Panc1 (cell line): ENCODE measurements at regions of chr15 and their contacts with region 1.

Region 1: GRCh38 chr15:41072013-41072412 is 44.1 kb downstream of the INO80 start:
- DNase-seq: no peak
- ATAC-seq: no peak
- H3K4me3 ChIP-seq: no peak overlapping the region
- H3K27ac ChIP-seq: no peak overlapping the region
- H3K4me1 ChIP-seq: no peaks in the 10 kb centered on the region
- H3K27me3 ChIP-seq: no peaks in the 10 kb centered on the region
- CTCF ChIP-seq: no peak

Region 2: GRCh38 chr15:40873625-40874561 is 198.1 kb before region 1 on chr15 and contains the start of gene RHOV:
- CTCF ChIA-PET with region 1: no interaction called
- POLR2A ChIA-PET with region 1: interaction called, 10 read pairs
- in situ Hi-C with region 1: no loop called
- intact Hi-C with region 1: no loop called
- DNase-seq: no peak
- ATAC-seq: peak; percentile 94
- H3K4me3 ChIP-seq: peak within 1 kb of the TSS; percentile 51 to 59
- H3K27ac ChIP-seq: no peak within 1 kb of the TSS
- H3K4me1 ChIP-seq: peaks cover 4% of the 10 kb centered on the region; the same call in 1 of the 2 replicates
- H3K27me3 ChIP-seq: no peaks in the 10 kb centered on the region
- CTCF ChIP-seq: no peak; the same call in 1 of the 2 replicates
- total RNA-seq, gene RHOV: 4.2 TPM

Region 3: GRCh38 chr15:40899536-40900207 is 172.3 kb before region 1 on chr15:
- CTCF ChIA-PET with region 1: no interaction called
- POLR2A ChIA-PET with region 1: interaction called, 10 read pairs
- in situ Hi-C with region 1: no loop called
- intact Hi-C with region 1: no loop called
- DNase-seq: no peak
- ATAC-seq: no peak
- H3K4me3 ChIP-seq: no peak overlapping the region
- H3K27ac ChIP-seq: no peak overlapping the region
- H3K4me1 ChIP-seq: peaks cover 8% of the 10 kb centered on the region
- H3K27me3 ChIP-seq: no peaks in the 10 kb centered on the region
- CTCF ChIP-seq: no peak